ENCODE measurements at regions of chr19 and their contacts with region 1.

Region 1: GRCh38 chr19:40613640-40614303 is 12.6 kb downstream of the LTBP4 start:
- DNase-seq: peak; percentile 79 to 86 (median 83)
- H3K4me3 ChIP-seq: peak overlapping the region; percentile 85
- H3K4me3 Mint-ChIP-seq: peak overlapping the region; percentile 88 to 98 (median 94)
- H3K27ac ChIP-seq: peak overlapping the region; percentile 74
- H3K27ac Mint-ChIP-seq: peak overlapping the region; percentile 80 to 96 (median 95)
- H3K4me1 ChIP-seq: peaks cover 43% of the 10 kb centered on the region
- H3K4me1 Mint-ChIP-seq: peaks cover 44 to 68% (median 46%) of the 10 kb centered on the region in 3 donors
- H3K27me3 ChIP-seq: no peaks in the 10 kb centered on the region
- H3K27me3 Mint-ChIP-seq: no peaks in the 10 kb centered on the region

Region 2: GRCh38 chr19:40425450-40426287 is 188.1 kb before region 1 on chr19 and contains the start of gene SERTAD1:
- CTCF ChIA-PET with region 1: no interaction called
- POLR2A ChIA-PET with region 1: interaction called, 15 read pairs
- DNase-seq: peak; percentile 100
- H3K4me3 ChIP-seq: peak within 1 kb of the TSS; percentile 97
- H3K4me3 Mint-ChIP-seq: peak within 1 kb of the TSS; percentile 90 to 99 (median 96)
- H3K27ac ChIP-seq: peak within 1 kb of the TSS; percentile 90
- H3K27ac Mint-ChIP-seq: peak within 1 kb of the TSS; percentile 94 to 100 (median 98)
- H3K4me1 ChIP-seq: peaks cover 20% of the 10 kb centered on the region
- H3K4me1 Mint-ChIP-seq: peaks cover 25 to 33% (median 31%) of the 10 kb centered on the region in 3 donors
- H3K27me3 ChIP-seq: no peaks in the 10 kb centered on the region
- H3K27me3 Mint-ChIP-seq: peaks cover 0 to 5% of the 10 kb centered on the region in 2 donors
- total RNA-seq, gene SERTAD1: 15.9 to 17.8 TPM

Region 3: DNA sequence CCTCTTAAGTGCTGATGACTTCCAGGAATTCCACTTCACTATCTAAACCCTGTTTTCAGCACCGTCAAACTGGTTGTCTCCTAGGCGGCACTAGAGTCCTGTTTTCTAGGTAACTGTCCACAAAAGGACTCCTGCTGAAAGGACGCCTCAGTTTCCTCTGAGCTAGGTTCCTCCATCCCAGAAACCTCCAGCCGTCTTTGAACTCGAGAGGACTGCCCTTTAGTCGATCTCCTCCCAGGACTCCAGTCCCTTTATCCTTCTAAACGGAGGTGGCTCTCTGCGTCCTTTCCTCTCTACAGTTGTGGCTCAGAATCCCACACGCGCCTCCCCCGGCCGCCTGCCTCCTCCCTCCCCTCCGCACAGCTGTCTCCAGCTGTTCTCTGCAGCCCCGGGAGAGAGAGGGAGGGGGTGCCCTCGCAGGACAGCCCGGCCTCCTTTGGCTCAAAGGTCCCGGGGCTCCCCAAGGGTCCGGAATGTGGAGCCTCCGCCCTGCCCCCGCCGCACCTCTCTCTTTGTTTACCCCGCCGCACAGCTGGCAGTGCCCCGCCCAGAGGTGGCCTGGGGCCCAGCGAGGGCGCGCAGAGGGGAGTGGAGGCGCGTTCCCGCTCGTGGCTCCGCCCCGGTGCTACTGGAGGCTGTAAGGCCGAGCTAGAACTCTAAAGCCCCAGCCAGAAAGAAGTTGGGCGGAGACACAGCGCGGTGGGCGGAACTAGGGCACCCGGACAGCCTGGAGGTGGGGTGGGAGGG is 10.2 kb before region 1 on chr19:
- CTCF ChIA-PET with region 1: interaction called, 8 read pairs
- POLR2A ChIA-PET with region 1: interaction called, 26 read pairs
- DNase-seq: peak; percentile 90 to 97 (median 97)
- H3K4me3 ChIP-seq: peak overlapping the region; percentile 80
- H3K4me3 Mint-ChIP-seq: peak overlapping the region; percentile 87 to 95 (median 88)
- H3K27ac ChIP-seq: peak overlapping the region; percentile 73
- H3K27ac Mint-ChIP-seq: peak overlapping the region; percentile 63 to 99 (median 95)
- H3K4me1 ChIP-seq: peaks cover 74% of the 10 kb centered on the region
- H3K4me1 Mint-ChIP-seq: peaks cover 54 to 90% (median 66%) of the 10 kb centered on the region in 3 donors
- H3K27me3 ChIP-seq: peaks cover 29% of the 10 kb centered on the region
- H3K27me3 Mint-ChIP-seq: peaks cover 27% of the 10 kb centered on the region in 2 donors

Region 4: DNA sequence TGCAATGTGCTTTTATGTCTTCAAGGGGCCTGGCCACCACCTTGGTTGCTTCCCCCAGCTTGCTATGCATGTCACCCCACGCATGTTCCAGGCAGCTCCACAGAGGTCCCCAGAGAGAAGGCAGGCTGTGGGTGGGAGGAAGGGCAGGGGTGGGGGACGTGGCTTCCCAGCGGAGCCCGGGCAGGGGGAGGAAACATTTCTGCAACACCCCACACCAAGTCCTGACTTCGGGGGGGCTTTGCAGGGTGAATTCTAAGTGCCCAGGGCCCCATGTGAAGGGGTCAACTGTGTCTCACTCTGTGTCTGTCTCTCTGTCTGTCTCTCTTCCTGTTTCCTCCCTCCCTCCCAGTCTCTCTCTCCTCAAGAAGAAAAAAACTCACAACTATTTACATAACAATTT is 27.0 kb after region 1 on chr19:
- CTCF ChIA-PET with region 1: interaction called, 58 read pairs
- POLR2A ChIA-PET with region 1: no interaction called
- DNase-seq: no peak
- H3K4me3 ChIP-seq: no peak overlapping the region
- H3K4me3 Mint-ChIP-seq: no peak overlapping the region
- H3K27ac ChIP-seq: no peak overlapping the region
- H3K27ac Mint-ChIP-seq: no peak overlapping the region
- H3K4me1 ChIP-seq: no peaks in the 10 kb centered on the region
- H3K4me1 Mint-ChIP-seq: peaks cover 0 to 5% (median 0%) of the 10 kb centered on the region in 3 donors
- H3K27me3 ChIP-seq: no peaks in the 10 kb centered on the region
- H3K27me3 Mint-ChIP-seq: peaks cover 10 to 12% of the 10 kb centered on the region in 2 donors

Region 5: GRCh38 chr19:40674291-40674690 is 60.5 kb after region 1 on chr19:
- CTCF ChIA-PET with region 1: no interaction called
- POLR2A ChIA-PET with region 1: no interaction called
- DNase-seq: no peak
- H3K4me3 ChIP-seq: no peak overlapping the region
- H3K4me3 Mint-ChIP-seq: no peak overlapping the region
- H3K27ac ChIP-seq: no peak overlapping the region
- H3K27ac Mint-ChIP-seq: no peak overlapping the region
- H3K4me1 ChIP-seq: no peaks in the 10 kb centered on the region
- H3K4me1 Mint-ChIP-seq: no peaks in the 10 kb centered on the region
- H3K27me3 ChIP-seq: no peaks in the 10 kb centered on the region
- H3K27me3 Mint-ChIP-seq: no peaks in the 10 kb centered on the region

Measured in CD8-positive, alpha-beta memory T cell (primary cell).